Left colon (tissue), 2 donors: ENCODE measurements at regions of chr10 and their contacts with region 1.

Region 1: DNA sequence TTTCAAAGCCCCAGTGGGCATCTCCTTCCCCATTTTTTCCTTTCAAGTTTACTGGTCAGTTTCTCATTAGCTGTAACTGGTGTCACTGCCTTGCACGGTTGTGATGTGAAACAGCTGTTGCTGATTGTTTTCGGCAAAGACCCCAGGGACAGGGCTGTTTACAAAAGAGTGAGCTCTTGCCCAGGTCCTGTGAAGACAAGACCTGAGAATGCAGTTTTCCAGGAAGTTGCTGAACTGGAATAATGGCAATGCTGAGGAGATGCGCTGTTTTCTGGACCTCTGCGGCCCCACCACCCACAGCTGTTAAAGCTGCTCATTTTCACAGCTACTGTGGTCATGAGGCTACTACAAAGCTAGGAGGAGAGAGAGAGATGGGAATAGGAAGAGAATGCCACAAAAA is 116.6 kb upstream of the RSU1 start:
- DNase-seq: no peak
- ATAC-seq: no peak

Region 2: GRCh38 chr10:15035385-15036301 is 1898.1 kb before region 1 on chr10:
- intact Hi-C with region 1: no loop called
- DNase-seq: peak; percentile 17 to 30
- ATAC-seq: no peak

Region 3: GRCh38 chr10:15744217-15744865 is 1189.4 kb before region 1 on chr10:
- intact Hi-C with region 1: no loop called
- DNase-seq: peak; percentile 33 to 64
- ATAC-seq: peak; percentile 36

Region 4: GRCh38 chr10:16393271-16393858 is 540.4 kb before region 1 on chr10:
- intact Hi-C with region 1: no loop called
- DNase-seq: no peak
- ATAC-seq: no peak

Region 5: GRCh38 chr10:16893664-16894063 is 40.1 kb before region 1 on chr10:
- intact Hi-C with region 1: loop called in 1 of 2 experiments (anchors 2 kb)
- DNase-seq: no peak
- ATAC-seq: no peak